MCF 10A (cell line): ENCODE measurements at regions of chr5 and their contacts with region 1.

Region 1: DNA sequence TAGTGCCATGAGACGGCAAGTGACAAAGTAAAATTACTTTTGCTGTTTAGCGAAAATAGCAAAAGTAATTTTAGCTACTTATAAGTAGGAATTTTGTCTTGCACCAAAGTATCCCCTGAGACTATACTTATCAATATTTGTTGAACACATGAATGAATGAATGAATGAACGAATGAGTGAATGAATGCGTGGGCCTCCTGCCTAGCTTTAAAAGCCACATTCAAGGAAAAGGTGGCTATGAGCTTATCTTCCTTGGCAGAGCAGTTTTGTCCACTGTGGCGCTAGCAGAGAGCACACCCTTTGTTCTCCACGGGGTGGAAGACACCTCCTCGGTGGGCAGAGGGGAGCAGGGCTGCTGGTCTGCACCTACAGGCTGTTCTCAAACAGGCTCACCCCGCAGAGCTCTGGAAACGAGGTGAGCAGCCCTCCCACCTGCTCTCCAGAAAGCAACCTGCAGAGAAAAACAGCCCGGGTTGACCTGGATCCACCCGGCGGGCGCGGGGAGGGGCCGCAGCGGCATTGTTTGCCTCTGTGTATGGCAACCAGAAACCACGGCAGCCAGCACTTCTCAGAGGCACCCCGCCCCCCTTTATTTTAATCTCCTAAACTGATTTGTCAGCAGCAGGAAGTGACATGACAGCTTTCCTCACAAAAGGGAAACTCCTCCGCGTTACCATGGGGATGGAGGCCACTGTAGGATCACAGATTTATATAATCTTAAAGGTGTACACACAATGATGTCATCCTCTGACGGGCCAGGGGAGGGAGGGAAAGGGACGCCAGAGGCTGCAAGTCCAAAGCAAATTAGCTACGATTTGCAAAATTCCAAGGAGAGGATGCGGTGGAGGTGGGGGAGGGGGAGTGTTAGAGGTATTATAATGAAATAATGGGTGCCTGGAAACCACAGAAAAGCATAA is 5.9 kb downstream of the DUSP1 start:
- DNase-seq: peak; percentile 100
- H3K4me3 Mint-ChIP-seq: peak overlapping the region; percentile 98
- H3K27ac Mint-ChIP-seq: peak overlapping the region; percentile 99
- H3K4me1 Mint-ChIP-seq: peaks cover 24% of the 10 kb centered on the region
- H3K27me3 Mint-ChIP-seq: no peaks in the 10 kb centered on the region
- CTCF ChIP-seq: no peak

Region 2: DNA sequence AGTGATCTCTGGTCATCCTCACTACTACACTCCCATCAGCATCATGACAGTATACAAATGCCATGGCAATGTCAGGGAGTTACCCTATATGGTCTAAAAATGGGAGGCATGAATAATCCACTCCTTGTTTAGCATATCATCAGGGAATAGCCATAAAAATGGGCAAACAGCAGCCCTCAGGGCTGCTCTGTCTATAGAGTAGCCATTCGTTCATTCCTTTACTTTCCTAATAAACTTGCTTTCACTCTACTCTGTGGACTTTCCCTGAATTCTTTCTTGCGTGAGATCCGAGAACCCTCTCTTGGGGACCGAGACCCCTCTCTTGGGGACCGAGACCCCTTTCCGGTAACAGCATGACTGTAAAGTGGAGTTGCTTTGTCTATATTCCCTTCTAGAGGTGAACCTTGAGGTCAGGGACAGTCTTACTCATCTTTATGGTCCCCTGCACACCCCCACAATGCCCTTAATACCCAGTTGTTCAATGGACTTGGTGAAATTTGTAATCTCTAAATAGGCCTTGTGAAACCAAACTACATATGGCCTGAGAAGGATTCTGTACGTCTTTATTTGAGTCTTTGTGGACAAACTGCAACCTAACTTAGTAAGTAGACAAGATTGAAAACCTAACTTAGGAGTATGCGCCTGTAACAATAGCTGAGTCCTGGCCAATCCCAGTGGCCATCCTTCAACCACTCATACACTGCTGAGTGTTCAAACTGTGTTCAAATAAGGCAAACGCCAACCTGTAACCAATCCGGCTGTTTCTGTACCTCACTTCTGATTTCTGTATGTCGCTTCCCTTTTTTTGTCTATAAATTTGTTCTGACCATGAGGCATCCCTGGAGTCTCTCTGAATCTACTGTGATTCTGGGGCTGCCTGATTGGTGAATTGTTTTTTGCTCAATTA is 449.3 kb before region 1 on chr5:
- CTCF ChIA-PET with region 1: no interaction called
- POLR2A ChIA-PET with region 1: no interaction called
- intact Hi-C with region 1: no loop called
- DNase-seq: no peak
- H3K4me3 Mint-ChIP-seq: no peak overlapping the region
- H3K27ac Mint-ChIP-seq: peak overlapping the region; percentile 13
- H3K4me1 Mint-ChIP-seq: peaks cover 12% of the 10 kb centered on the region
- H3K27me3 Mint-ChIP-seq: no peaks in the 10 kb centered on the region
- CTCF ChIP-seq: no peak

Region 3: DNA sequence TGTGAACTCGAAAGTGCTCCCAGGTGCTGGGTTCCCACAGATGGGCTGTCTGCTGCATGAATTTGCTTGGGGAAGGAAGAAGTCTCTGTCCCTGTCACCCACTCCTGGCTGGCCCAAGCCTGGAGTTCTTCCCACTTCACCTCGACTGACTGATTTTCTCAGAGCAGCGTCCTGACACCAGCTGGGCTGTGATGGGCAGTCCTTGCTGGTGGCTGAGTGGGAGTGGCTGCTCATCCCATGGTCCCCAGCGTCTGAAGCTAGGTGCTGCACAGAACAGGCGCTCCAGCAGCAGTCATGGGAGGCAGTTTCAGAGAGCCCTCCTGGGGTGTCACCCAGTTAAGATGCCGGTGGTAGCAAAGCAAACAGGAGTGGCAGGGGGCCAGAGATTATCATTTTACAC is 134.1 kb before region 1 on chr5:
- CTCF ChIA-PET with region 1: no interaction called
- POLR2A ChIA-PET with region 1: no interaction called
- intact Hi-C with region 1: no loop called
- DNase-seq: no peak
- H3K4me3 Mint-ChIP-seq: no peak overlapping the region
- H3K27ac Mint-ChIP-seq: no peak overlapping the region
- H3K4me1 Mint-ChIP-seq: no peaks in the 10 kb centered on the region
- H3K27me3 Mint-ChIP-seq: no peaks in the 10 kb centered on the region
- CTCF ChIP-seq: no peak

Region 4: GRCh38 chr5:172727551-172727950 is 37.6 kb before region 1 on chr5:
- CTCF ChIA-PET with region 1: interaction called, 35 read pairs
- POLR2A ChIA-PET with region 1: interaction called, 287 read pairs
- intact Hi-C with region 1: no loop called
- DNase-seq: no peak
- H3K4me3 Mint-ChIP-seq: no peak overlapping the region
- H3K27ac Mint-ChIP-seq: peak overlapping the region; percentile 61
- H3K4me1 Mint-ChIP-seq: peaks cover 19% of the 10 kb centered on the region
- H3K27me3 Mint-ChIP-seq: no peaks in the 10 kb centered on the region
- CTCF ChIP-seq: no peak

Region 5: GRCh38 chr5:172740428-172741201 is 24.5 kb before region 1 on chr5:
- CTCF ChIA-PET with region 1: interaction called, 4 read pairs
- POLR2A ChIA-PET with region 1: interaction called, 287 read pairs
- intact Hi-C with region 1: loop called (anchors 1 kb)
- DNase-seq: peak; percentile 91
- H3K4me3 Mint-ChIP-seq: no peak overlapping the region
- H3K27ac Mint-ChIP-seq: peak overlapping the region; percentile 95
- H3K4me1 Mint-ChIP-seq: peaks cover 23% of the 10 kb centered on the region
- H3K27me3 Mint-ChIP-seq: no peaks in the 10 kb centered on the region
- CTCF ChIP-seq: no peak

Region 6: DNA sequence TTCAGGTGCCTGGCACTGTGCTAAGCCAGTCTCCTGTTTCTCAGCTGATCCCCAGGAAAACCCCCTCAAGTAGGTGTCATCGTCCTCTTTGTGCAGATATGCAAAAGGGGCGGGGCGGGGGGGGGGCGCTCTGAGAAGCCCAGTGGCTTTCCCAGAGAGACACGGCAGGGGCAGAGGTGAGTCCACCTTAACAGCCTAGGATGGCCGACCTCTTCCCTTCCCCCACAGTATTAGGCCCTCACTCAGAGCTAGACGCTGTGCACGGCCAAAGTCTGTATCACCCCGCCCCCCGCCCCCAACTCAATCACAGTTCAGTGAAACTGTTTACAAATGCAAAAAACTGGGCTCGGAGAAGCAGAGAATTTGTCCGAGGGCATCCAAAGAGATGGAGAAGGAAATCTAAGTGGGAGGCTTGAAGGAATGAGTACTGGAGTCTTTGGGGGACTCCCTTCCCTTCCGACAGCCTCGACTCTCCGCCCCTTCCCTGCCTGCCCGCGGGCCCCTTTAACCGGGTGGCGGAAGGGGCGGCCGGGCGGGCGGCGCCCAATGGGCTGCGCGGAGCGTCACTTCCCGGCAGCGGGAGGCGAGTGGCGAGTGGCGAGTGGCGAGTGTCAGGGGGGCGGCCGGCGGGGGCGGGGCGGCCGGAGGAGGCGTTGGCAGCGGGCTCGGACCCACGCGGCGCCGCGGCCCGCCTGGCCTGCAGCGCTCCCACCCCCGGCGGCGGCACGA is 68.7 kb after region 1 on chr5 and contains the start of gene ERGIC1:
- CTCF ChIA-PET with region 1: interaction called, 4 read pairs
- POLR2A ChIA-PET with region 1: interaction called, 112 read pairs
- intact Hi-C with region 1: no loop called
- DNase-seq: peak; percentile 91
- H3K4me3 Mint-ChIP-seq: peak within 1 kb of the TSS; percentile 87
- H3K27ac Mint-ChIP-seq: peak within 1 kb of the TSS; percentile 88
- H3K4me1 Mint-ChIP-seq: peaks cover 40% of the 10 kb centered on the region
- H3K27me3 Mint-ChIP-seq: no peaks in the 10 kb centered on the region
- CTCF ChIP-seq: peak; percentile 26
- total RNA-seq, gene ERGIC1: 257 and 292 TPM in 2 replicates

Region 7: GRCh38 chr5:172910828-172911627 is 145.9 kb after region 1 on chr5:
- CTCF ChIA-PET with region 1: interaction called, 35 read pairs
- POLR2A ChIA-PET with region 1: interaction called, 910 read pairs
- intact Hi-C with region 1: loop called (anchors 1 kb)
- DNase-seq: peak; percentile 99
- H3K4me3 Mint-ChIP-seq: no peak overlapping the region
- H3K27ac Mint-ChIP-seq: peak overlapping the region; percentile 90
- H3K4me1 Mint-ChIP-seq: peaks cover 43% of the 10 kb centered on the region
- H3K27me3 Mint-ChIP-seq: no peaks in the 10 kb centered on the region
- CTCF ChIP-seq: peak; percentile 50

Region 8: DNA sequence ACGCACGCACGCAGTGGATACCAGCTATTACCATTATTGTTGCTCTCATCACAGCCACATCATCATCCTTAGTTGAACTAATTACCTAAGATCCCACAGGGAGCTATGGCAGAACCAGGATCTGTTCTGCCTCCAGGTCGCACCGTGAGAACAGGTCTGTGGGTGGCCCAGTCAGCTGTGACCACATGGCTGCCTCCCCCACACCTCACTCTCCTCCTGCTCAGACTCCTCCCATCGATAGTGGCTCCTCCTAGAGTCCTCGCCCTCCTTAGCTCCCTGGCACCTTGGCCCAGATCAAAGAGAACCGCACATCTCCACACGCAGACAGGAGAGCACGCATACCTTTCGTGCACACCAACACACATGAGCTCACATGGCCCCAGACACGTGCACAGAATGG is 161.7 kb after region 1 on chr5:
- CTCF ChIA-PET with region 1: interaction called, 83 read pairs
- POLR2A ChIA-PET with region 1: interaction called, 120 read pairs
- intact Hi-C with region 1: no loop called
- DNase-seq: no peak
- H3K4me3 Mint-ChIP-seq: no peak overlapping the region
- H3K27ac Mint-ChIP-seq: peak overlapping the region; percentile 41
- H3K4me1 Mint-ChIP-seq: peaks cover 19% of the 10 kb centered on the region
- H3K27me3 Mint-ChIP-seq: no peaks in the 10 kb centered on the region
- CTCF ChIP-seq: no peak